Activated CD8-positive, alpha-beta memory T cell treated with anti-CD3 and anti-CD28 coated beads, Interleukin-2, amount 10 ng/mL, durations not matched to agents 7 days and 5 days (primary cell): ENCODE measurements at regions of chr1 and their contacts with region 1.

Region 1: DNA sequence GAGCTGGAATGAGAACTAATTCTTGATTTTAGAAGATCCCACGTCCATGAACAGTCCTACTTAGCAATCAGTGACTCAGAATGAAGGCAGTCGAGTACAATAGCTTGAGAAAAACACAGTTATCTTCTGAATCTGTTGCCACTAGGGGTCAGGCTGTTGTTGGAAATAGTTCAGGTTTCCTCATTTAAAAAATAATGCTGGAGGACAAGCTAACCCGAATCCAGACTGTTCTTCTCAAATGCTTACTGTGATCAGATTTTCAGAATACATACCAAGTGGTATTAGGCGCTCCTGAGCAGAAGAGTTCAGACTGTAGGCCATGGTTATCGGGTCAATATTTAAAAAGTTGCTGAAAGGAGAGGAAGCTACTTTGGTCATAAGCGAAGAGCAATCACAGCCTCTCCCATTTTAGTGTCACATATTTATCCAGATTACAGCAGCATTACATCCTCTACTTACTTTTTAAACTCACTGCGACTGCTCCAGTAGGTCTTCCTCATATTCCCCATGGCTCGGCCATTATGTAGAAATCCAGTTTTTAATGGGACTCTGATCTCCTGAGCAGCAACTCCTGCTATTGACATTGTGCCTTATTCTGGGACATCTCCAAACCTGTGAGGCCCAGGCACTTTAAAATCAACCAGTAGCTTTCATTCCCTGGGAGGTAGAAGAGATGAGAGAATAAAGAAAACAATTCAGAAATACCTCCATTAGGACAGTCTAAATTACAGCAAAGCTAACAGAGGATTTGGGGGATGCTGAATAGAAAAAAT is 10.9 kb downstream of the ERRFI1 start:
- DNase-seq: peak; percentile 49
- ATAC-seq: peak; percentile 65
- H3K4me3 Mint-ChIP-seq: no peak overlapping the region
- H3K27ac Mint-ChIP-seq: no peak overlapping the region
- H3K4me1 Mint-ChIP-seq: peaks cover 3% of the 10 kb centered on the region
- H3K27me3 Mint-ChIP-seq: peaks cover 17% of the 10 kb centered on the region

Region 2: DNA sequence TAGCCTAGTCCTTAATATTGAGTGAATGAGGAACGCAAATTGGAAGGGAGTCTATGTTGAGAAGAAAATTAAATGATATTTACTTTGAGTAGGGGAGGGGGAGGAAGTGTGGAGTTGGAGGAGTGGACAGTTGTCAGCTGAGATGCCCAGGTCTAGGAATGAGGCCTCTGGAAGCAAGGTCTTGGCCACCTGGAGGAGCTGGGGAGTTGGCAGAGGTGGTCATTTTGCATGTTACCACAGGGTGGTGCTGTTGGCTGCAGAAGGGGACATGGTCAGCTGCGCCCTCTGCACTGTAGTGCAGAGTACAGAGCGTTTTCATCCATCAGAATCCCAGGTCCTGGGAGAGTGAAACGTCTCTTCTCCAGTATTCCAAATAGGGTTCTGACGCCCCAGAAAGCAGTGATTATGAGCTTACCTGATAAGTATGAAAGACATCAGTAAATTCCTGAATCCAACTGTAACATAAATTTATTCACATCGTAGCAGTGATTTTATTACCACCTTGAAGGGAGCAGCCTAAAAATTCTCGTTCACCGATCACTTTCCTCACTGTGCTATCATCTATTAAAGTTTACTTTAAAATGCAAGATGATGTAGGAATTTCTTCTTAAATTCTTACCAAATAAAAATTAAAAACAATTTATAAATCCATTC is 39.9 kb before region 1 on chr1:
- CTCF ChIA-PET with region 1: interaction called, 13 read pairs
- DNase-seq: peak; percentile 52
- ATAC-seq: peak; percentile 75
- H3K4me3 Mint-ChIP-seq: no peak overlapping the region
- H3K27ac Mint-ChIP-seq: no peak overlapping the region
- H3K4me1 Mint-ChIP-seq: peaks cover 15% of the 10 kb centered on the region
- H3K27me3 Mint-ChIP-seq: no peaks in the 10 kb centered on the region

Region 3: GRCh38 chr1:7983086-7983778 is 32.0 kb before region 1 on chr1:
- CTCF ChIA-PET with region 1: interaction called, 13 read pairs
- DNase-seq: no peak
- ATAC-seq: no peak
- H3K4me3 Mint-ChIP-seq: no peak overlapping the region
- H3K27ac Mint-ChIP-seq: no peak overlapping the region
- H3K4me1 Mint-ChIP-seq: peaks cover 10% of the 10 kb centered on the region
- H3K27me3 Mint-ChIP-seq: no peaks in the 10 kb centered on the region

Region 4: DNA sequence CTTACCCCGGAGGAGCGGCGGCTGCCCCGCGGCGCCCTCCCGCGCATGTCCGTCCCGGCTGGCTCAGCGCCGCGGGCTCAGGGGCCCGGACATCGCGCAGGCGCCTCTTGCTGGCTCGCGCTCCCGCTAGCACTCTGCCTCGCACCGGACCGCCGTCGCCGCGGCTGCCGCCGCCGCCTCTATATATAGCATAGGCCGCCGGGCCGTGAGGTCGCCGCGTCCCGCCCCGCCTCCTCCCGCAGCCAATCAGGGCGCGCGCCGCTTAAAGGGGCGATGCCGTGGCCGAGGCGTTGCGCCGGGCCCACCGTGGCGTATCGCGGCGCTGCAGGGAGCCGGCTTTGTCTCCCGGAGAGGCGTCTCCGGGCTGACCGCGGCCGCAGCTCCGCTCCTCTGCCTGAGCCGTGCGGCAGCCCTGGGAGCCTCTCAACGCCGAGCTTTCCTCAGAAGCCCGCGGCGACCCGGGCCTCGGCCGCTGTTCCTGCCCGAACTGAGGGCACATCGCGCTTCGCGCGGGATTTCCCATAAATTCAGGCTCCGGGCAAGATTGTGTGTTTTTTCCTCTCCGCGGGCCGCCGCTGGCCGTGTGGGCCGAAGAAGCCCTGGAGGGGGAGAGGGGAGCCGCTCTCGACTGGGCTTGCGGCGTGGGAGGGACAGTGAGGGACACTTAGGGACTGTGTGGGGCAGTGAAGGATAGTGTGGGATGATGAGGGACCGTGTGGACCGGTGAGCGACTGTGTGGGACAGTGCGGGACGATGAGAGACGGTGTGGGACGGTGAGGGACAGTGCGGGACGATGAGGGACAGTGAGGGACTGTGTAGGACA is 11.1 kb after region 1 on chr1 and contains the start of gene ERRFI1:
- CTCF ChIA-PET with region 1: interaction called, 17 read pairs
- DNase-seq: peak; percentile 88
- ATAC-seq: peak; percentile 96
- H3K4me3 Mint-ChIP-seq: peak within 1 kb of the TSS; percentile 70
- H3K27ac Mint-ChIP-seq: peak within 1 kb of the TSS; percentile 18
- H3K4me1 Mint-ChIP-seq: peaks cover 10% of the 10 kb centered on the region
- H3K27me3 Mint-ChIP-seq: peaks cover 55% of the 10 kb centered on the region
- total RNA-seq, gene ERRFI1: 0.53 to 1.5 TPM

Region 5: GRCh38 chr1:8314346-8315280 is 299.4 kb after region 1 on chr1:
- CTCF ChIA-PET with region 1: interaction called, 84 read pairs
- DNase-seq: peak; percentile 60
- ATAC-seq: peak; percentile 25
- H3K4me3 Mint-ChIP-seq: no peak overlapping the region
- H3K27ac Mint-ChIP-seq: peak overlapping the region; percentile 9
- H3K4me1 Mint-ChIP-seq: peaks cover 13% of the 10 kb centered on the region
- H3K27me3 Mint-ChIP-seq: peaks cover 47% of the 10 kb centered on the region

Region 6: DNA sequence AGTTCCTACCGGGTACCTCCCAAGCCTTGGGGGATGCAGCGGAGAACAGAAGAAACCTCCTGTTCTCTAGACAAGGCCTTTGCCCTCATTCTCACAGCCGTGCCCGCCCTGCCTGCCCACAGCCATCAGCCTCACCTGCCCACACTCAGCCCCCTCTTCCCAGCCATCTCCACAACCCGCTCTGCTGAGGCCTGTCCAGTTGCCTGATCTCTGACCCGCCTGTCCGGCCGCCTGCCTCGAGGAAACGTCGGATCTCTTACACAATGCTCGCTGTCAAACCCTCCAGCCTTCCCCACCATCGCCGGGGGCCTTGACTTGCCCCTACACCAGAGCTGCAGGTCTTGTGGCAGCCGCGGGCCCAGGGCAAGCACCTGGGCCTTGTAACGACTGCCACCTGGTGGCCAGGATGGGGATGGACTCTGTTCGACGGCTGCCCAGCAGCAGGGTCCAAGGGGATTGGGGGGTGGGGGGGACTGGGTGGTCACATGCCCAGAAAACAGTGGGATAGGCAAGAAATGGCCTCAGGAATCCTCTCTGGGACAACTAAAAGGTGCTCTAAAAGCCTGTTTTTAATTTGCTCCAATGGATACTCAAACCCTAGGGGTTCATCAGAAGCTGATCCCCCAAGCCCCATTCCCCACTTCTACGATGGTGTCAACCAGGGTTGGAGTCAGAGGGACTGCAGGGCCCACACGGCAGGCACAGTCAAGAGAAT is 333.7 kb after region 1 on chr1:
- CTCF ChIA-PET with region 1: interaction called, 79 read pairs
- DNase-seq: peak; percentile 71
- ATAC-seq: peak; percentile 77
- H3K4me3 Mint-ChIP-seq: no peak overlapping the region
- H3K27ac Mint-ChIP-seq: no peak overlapping the region
- H3K4me1 Mint-ChIP-seq: no peaks in the 10 kb centered on the region
- H3K27me3 Mint-ChIP-seq: peaks cover 2% of the 10 kb centered on the region